Thyroid gland (tissue), 4 donors: ENCODE measurements at regions of chr4 and their contacts with region 1.

Region 1: DNA sequence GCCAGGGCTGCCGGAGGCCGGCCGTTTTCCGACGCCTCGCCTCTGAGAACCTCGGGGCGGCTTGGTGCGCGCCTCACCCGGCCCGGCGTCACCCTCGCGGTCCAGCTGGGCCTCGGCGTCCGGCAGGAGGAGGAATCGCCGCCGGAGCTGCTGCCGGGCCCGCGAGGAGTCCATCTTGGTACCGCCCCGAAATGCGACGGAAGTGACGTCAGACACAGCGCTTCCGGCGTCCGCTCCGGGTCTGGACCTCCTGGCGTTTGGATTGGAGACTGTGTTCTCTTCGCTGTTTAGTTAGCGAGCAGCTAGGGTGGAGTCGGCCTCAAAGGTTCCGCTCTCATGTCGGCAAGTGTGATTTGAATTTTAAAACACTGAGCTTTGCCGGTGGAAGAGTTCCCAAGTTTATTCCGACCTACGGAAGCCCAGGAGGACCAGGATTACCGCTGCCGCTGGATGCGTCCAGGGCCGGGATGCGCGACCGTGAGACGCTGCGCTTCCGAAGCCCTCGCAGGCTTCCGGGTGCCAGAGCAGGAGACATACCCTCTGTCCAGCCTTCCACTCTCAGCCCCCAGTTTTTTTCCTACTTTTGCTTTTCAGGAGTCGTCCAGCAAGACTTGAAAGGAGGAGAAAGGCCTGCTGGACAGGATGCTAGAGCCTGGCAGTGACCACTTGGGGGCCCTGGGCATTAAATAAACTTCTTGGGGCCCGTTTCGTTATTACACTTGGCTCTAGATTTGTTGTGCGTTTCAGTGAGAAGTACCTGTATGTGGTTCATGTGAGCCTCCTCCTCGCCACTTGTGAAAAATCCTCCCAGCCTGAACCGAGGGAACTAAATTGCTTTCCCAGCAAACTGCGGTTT is at the start of gene TMEM128:
- DNase-seq: peak; percentile 91
- H3K4me3 ChIP-seq: peak within 1 kb of the TSS; percentile 38 to 82 (median 81)
- H3K27ac ChIP-seq: peak within 1 kb of the TSS; percentile 77 to 93 (median 86)
- H3K4me1 ChIP-seq: peaks cover 11 to 15% of the 10 kb centered on the region in 2 donors
- H3K27me3 ChIP-seq: no peaks in the 10 kb centered on the region
- CTCF ChIP-seq: peak in 4 of 6 experiments; percentile 3 to 49 (median 28)
- POLR2A ChIP-seq: peak in 1 of 2 donors; percentile 78
- total RNA-seq, gene TMEM128: 24.9 to 36.8 (median 33.5) TPM

Region 2: GRCh38 chr4:4289941-4290850 is 41.9 kb after region 1 on chr4 and contains the starts of genes LYAR and ZBTB49:
- intact Hi-C with region 1: loop called (anchors 5 kb)
- DNase-seq: peak; percentile 92 to 95
- H3K4me3 ChIP-seq: peak within 1 kb of the TSS; percentile 35 to 89 (median 89)
- H3K27ac ChIP-seq: peak within 1 kb of the TSS in 1 of 3 donors; percentile 44
- H3K4me1 ChIP-seq: peaks cover 17 to 18% of the 10 kb centered on the region in 2 donors
- H3K27me3 ChIP-seq: no peaks in the 10 kb centered on the region
- CTCF ChIP-seq: no peak
- POLR2A ChIP-seq: peak in 1 of 2 donors; percentile 79
- total RNA-seq, gene LYAR: 4.5 to 13.0 (median 10.4) TPM
- total RNA-seq, gene ZBTB49: 7.5 to 21.7 (median 9.2) TPM